ENCODE measurements at regions of chrX and their contacts with region 1.

Region 1: DNA sequence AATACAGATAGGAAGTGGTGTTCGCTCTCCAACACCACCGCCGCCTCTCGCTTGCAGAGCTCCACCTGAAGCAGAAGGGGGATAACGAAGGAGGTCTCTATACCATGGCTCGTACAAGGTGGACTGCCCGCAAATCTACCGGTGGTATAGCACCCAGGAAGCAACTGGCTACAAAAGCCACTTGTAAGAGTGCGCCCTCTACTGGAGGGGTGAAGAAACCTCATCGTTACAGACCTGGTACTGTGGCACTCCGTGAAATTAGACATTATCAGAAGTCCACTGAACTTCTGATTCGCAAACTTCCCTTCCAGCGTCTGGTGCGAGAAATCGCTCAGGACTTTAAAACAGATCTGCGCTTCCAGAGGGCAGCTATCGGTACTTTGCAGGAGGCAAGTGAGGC is 5.2 kb upstream of the BMP15 start:
- DNase-seq: no peak
- H3K4me3 ChIP-seq: no peak overlapping the region
- H3K27ac ChIP-seq: no peak overlapping the region
- H3K4me1 ChIP-seq: no peaks in the 10 kb centered on the region
- H3K27me3 ChIP-seq: no peaks in the 10 kb centered on the region
- CTCF ChIP-seq: no peak

Region 2: DNA sequence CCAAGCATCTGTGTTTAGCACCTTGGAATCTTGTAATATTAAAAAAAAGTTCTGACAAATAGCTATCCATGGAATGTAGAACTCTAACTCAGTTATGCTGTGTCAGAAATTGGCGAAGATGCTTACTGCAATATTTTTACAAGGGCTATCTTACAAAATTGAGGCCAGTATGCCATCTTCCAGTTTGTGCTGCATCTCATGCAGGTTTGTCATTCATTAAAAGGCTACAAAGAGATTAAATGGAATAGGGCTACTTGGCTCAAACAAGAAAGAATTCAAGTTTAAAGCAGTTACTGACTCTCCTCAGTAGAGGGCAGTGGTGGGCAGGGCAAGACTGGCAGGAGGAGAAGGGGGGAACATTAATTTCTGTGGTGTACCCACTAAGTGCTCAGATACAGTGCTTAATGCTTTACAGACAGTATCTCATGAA is 157.8 kb before region 1 on chrX:
- intact Hi-C with region 1: loop called (anchors 10 kb)
- DNase-seq: no peak
- H3K4me3 ChIP-seq: no peak overlapping the region
- H3K27ac ChIP-seq: no peak overlapping the region
- H3K4me1 ChIP-seq: no peaks in the 10 kb centered on the region
- H3K27me3 ChIP-seq: no peaks in the 10 kb centered on the region
- CTCF ChIP-seq: peak in 2 of 3 experiments; percentile 42 to 50

Measured in ascending aorta (tissue), 2 donors.